Activated CD4-positive, alpha-beta T cell treated with anti-CD3 and anti-CD28 coated beads, Interleukin-2, amount 10 ng/mL, durations not matched to agents 24 days and 14 days (primary cell): ENCODE measurements at regions of chr18 and their contacts with region 1.

Region 1: GRCh38 chr18:36828630-36829361 is at the starts of genes KIAA1328 and TPGS2:
- DNase-seq: peak; percentile 97
- H3K4me3 Mint-ChIP-seq: peak within 1 kb of the TSS; percentile 83
- H3K27ac Mint-ChIP-seq: peak within 1 kb of the TSS; percentile 98
- H3K4me1 Mint-ChIP-seq: peaks cover 45% of the 10 kb centered on the region
- H3K27me3 Mint-ChIP-seq: no peaks in the 10 kb centered on the region
- total RNA-seq, gene KIAA1328: 7.3 and 7.6 TPM in 2 replicates
- total RNA-seq, gene TPGS2: 76.9 and 77.5 TPM in 2 replicates

Region 2: DNA sequence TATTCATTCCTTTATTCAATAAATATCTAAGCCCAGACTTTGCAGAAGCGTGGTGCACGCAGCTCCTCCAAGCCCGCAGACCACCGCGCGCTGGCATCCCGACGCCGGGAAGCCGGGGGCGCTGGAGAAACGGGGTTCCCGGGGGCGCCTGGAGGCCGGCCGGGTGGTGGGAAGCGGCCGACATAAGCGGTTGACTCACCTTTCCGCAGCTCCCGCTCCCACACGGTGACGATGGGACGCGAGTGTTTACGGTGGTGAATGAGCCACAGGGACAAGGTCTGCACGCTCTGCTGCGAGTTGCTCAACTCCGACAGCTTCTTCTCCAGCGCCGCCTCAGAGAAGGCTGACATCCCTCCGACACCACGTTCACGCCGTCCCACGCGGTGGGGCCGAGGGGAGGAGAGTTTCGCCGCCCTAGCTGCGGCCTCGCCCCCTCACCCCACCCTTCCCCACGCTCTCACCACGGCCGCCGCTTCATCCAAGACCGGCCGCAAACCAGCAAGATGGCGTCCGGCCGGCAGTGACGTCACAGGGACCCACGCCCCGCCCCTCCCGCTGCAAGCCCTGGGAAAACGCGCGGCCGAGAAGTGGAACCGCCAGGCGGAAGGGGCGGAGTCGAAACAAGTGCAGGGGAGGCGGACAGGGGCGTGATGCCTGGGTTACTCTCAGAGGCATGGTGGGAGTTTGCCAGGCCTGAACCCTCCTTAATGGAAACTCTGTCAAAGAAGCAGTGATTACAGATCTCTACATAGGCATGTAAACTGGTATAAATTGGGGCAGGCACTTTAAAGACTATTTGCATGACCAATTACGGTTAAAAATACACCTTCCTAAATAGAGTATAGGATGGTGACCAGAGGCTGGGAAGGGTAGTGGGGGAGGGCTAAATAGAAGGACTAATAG is 761.5 kb before region 1 on chr18 and contains the start of gene RPRD1A:
- intact Hi-C with region 1: loop called (anchors 1 kb)
- DNase-seq: peak; percentile 99
- H3K4me3 Mint-ChIP-seq: peak within 1 kb of the TSS; percentile 95
- H3K27ac Mint-ChIP-seq: peak within 1 kb of the TSS; percentile 97
- H3K4me1 Mint-ChIP-seq: peaks cover 28% of the 10 kb centered on the region
- H3K27me3 Mint-ChIP-seq: peaks cover 7% of the 10 kb centered on the region
- total RNA-seq, gene RPRD1A: 24.6 and 27.4 TPM in 2 replicates

Region 3: DNA sequence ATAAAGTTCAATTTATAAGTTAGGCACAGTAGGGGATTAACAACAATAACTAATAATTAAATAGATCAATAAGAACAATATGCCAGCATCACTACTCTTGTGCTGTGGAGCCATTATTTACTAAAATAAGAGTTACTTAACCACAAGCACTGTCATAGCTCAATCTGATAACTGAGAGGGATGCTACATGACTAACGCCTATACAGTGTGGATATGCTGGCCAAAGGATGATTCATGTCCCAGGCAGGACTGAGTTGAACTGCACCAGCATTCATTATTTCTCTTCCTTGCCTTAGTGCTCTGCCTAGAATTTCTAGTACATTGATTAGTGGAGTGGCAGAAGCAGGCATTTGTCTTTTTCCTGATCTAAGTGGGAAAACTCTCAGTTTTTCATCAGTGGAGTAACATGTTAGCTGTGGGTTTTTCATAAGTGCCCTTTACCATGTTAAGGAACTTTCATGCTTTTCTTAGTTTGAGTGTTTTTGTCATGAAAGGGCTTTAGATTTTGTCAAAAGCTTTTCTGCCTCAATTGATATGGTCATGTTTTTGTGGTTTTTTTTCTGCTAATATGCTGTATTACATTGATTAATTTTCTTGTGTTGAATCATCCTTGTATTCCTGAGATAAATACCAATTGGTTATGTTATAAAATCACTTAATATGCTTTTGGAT is 21.9 kb after region 1 on chr18:
- intact Hi-C with region 1: no loop called
- DNase-seq: no peak
- H3K4me3 Mint-ChIP-seq: no peak overlapping the region
- H3K27ac Mint-ChIP-seq: no peak overlapping the region
- H3K4me1 Mint-ChIP-seq: no peaks in the 10 kb centered on the region
- H3K27me3 Mint-ChIP-seq: no peaks in the 10 kb centered on the region

Region 4: GRCh38 chr18:36899289-36899688 is 70.5 kb after region 1 on chr18:
- intact Hi-C with region 1: loop called (anchors 10 kb)
- DNase-seq: no peak
- H3K4me3 Mint-ChIP-seq: no peak overlapping the region
- H3K27ac Mint-ChIP-seq: no peak overlapping the region
- H3K4me1 Mint-ChIP-seq: peaks cover 2% of the 10 kb centered on the region
- H3K27me3 Mint-ChIP-seq: no peaks in the 10 kb centered on the region